Heart right ventricle (tissue), 16 donors: ENCODE measurements at regions of chr6 and their contacts with region 1.

Region 1: DNA sequence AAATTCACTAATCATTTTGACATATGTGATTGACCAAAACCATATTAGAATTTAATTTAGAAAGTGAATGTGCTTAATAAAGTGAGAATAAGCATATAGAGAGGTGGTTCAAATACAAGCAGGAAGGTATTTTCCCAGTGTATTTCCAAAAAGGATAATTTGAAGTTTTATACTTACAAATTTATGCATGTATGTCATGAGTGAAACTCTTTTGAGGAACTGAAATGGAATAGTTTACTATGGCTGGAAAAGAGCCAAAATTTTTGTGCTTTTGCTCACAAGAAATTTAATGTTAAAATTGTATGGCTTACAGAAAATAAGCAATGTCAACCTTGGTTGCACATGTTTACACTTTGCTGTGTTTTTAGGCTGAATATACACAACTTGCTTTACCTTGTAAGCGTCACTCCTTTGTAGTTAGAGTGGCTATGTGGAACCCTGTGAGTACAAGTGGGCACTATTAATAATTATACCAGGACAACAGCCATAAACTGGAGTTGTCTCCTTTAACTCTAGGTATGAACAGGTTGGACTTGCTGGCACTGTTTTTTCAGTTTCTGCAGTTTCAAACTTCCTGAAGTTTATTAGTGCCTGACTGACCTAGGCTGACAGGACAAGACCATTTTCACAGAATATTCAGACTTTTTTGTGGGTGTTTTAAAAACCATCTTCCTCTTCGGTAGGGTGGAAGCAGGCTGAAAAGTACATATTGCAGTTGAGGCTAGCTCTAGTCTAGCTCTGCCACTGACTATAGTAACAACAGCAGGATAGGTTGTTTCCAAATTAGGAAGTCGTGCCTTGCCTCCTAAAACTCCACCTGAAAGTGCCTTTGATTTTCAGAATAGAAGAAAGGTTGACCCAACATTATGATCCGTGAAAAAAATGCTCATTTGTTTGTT is 6.0 kb downstream of the AFDN start:
- DNase-seq: no peak
- ATAC-seq: peak in 5 of 8 donors; percentile 11 to 57 (median 52)
- H3K4me3 ChIP-seq: no peak overlapping the region
- H3K27ac ChIP-seq: peak overlapping the region in 2 of 10 donors; percentile 11 to 14
- H3K4me1 ChIP-seq: peaks cover 0 to 77% (median 53%) of the 10 kb centered on the region in 9 donors
- H3K27me3 ChIP-seq: peaks cover 0 to 24% (median 0%) of the 10 kb centered on the region in 7 donors
- CTCF ChIP-seq: no peak

Region 2: GRCh38 chr6:167892835-167893815 is 60.4 kb after region 1 on chr6:
- intact Hi-C with region 1: loop called in 2 of 10 experiments (anchors 5 to 10 kb)
- DNase-seq: no peak
- ATAC-seq: no peak
- H3K4me3 ChIP-seq: no peak overlapping the region
- H3K27ac ChIP-seq: no peak overlapping the region
- H3K4me1 ChIP-seq: no peaks in the 10 kb centered on the region
- H3K27me3 ChIP-seq: no peaks in the 10 kb centered on the region
- CTCF ChIP-seq: no peak